Activated naive CD4-positive, alpha-beta T cell treated with anti-CD3 and anti-CD28 coated beads, Interleukin-2, amount 10 ng/mL, durations not matched to agents 7 days and 5 days (primary cell): ENCODE measurements at regions of chr9 and their contacts with region 1.

Region 1: GRCh38 chr9:97895695-97896332 is 26.5 kb downstream of the TRMO start:
- DNase-seq: peak; percentile 42
- H3K4me3 Mint-ChIP-seq: no peak overlapping the region
- H3K27ac Mint-ChIP-seq: no peak overlapping the region
- H3K4me1 Mint-ChIP-seq: peaks cover 17% of the 10 kb centered on the region
- H3K27me3 Mint-ChIP-seq: no peaks in the 10 kb centered on the region

Region 2: DNA sequence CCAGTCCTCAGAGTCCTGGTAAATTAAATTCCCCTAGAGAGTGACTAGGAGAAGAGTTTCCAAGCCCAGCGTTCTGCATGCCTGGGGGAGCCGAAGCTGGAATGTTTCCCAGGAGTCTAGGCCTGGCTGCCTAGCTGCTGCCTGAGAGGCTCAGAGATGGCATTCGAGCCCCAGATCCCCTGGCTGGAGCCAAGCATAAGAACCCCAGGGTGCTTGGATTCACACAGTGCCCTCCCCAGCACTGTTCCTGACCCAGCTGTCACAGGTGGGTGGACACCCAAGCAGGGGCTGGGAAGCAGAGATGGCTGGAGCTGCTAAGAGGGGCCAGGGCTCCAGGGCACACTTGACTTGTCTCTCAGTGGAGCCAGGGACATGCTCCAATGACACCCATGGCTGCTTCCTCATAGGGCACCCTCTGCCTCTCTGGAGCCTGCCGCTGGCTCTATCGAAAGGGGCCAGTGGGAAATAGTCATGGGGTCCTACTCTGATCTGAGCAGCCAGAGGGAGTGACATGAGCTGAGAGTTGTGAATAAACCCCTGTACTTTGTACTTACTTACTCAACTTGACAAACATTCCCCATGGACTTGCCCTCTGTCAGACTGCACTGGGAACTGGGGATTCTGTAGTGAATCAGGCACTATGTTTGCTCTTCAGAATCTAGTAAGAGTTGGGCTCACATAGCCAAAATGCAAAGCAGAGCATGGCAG is 136.1 kb before region 1 on chr9:
- CTCF ChIA-PET with region 1: no interaction called
- DNase-seq: no peak
- H3K4me3 Mint-ChIP-seq: no peak overlapping the region
- H3K27ac Mint-ChIP-seq: no peak overlapping the region
- H3K4me1 Mint-ChIP-seq: no peaks in the 10 kb centered on the region
- H3K27me3 Mint-ChIP-seq: peaks cover 68% of the 10 kb centered on the region

Region 3: DNA sequence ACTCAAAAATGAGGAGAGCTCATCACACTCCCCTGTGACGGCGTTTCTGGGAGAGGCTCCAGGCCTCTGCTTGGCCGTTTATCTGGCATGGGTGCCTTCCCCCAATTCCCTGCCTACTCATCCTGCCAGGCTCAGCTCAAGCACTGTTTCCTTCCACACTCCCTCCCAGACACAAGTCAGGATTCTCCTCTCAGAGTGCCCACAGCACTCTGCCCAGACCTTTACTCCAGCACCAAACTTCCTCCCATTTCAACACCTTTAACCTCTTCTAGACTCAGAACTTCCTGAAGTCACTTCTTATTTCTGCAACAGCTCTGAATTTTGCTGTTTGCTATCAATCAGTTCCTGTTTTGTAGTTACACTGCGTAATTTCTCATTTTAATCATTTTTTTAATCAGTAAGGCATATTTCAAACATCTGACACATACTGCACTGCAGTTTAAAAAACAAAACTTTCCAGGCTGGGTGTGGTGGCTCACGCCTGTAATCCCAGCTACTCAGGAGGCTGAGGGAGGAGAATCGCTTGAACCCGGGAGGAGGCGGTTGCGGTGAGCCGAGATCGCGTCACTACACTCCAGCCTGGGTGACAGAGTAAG is 10.5 kb after region 1 on chr9:
- CTCF ChIA-PET with region 1: interaction called, 134 read pairs
- DNase-seq: peak; percentile 64
- H3K4me3 Mint-ChIP-seq: peak overlapping the region; percentile 73
- H3K27ac Mint-ChIP-seq: peak overlapping the region; percentile 99
- H3K4me1 Mint-ChIP-seq: peaks cover 91% of the 10 kb centered on the region
- H3K27me3 Mint-ChIP-seq: no peaks in the 10 kb centered on the region

Region 4: GRCh38 chr9:98391867-98392266 is 496.1 kb after region 1 on chr9:
- CTCF ChIA-PET with region 1: no interaction called
- DNase-seq: no peak
- H3K4me3 Mint-ChIP-seq: no peak overlapping the region
- H3K27ac Mint-ChIP-seq: no peak overlapping the region
- H3K4me1 Mint-ChIP-seq: peaks cover 6% of the 10 kb centered on the region
- H3K27me3 Mint-ChIP-seq: peaks cover 8% of the 10 kb centered on the region